Activated CD8-positive, alpha-beta T cell treated with anti-CD3 and anti-CD28 coated beads, Interleukin-2, amount 10 ng/mL, durations not matched to agents 7 days and 5 days (primary cell): ENCODE measurements at regions of chr10 and their contacts with region 1.

Region 1: GRCh38 chr10:129332476-129332875 is 134.6 kb upstream of the MGMT start:
- DNase-seq: peak; percentile 28
- ATAC-seq: no peak
- H3K4me3 Mint-ChIP-seq: no peak overlapping the region
- H3K27ac Mint-ChIP-seq: no peak overlapping the region
- H3K4me1 Mint-ChIP-seq: no peaks in the 10 kb centered on the region
- H3K27me3 Mint-ChIP-seq: no peaks in the 10 kb centered on the region

Region 2: DNA sequence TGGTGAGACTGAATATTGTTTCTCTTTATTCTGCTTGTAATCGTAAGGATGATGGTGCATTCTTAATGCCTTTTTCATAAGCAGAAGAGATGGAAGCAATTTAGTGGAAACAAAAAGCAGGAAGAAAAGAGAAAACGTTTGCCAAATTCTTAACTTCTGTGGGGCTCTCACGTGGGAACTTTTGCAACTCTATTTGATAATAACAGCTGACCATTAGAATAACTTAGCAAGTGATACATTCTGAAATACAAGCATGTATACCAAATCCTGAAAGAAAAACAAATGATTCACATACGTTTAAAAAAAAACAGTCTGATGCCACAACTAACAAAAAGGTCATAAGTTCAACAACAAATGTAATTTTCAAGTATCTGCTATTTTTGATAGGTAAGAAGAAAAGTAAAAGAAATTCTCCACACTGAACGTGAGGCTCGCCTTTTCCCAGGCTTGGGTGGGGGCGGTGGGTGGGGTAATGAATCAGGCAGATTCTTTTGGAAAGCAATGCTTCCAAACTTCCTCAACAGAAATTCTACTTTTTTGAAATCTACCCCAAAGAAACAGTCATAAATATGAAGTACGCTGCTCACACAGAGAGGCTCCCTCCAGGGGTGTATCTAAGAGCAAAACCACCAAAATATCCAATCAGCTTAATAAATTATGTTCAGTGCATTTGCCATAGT is 311.7 kb before region 1 on chr10:
- CTCF ChIA-PET with region 1: no interaction called
- POLR2A ChIA-PET with region 1: no interaction called
- DNase-seq: no peak
- ATAC-seq: no peak
- H3K4me3 Mint-ChIP-seq: no peak overlapping the region
- H3K27ac Mint-ChIP-seq: no peak overlapping the region
- H3K4me1 Mint-ChIP-seq: no peaks in the 10 kb centered on the region
- H3K27me3 Mint-ChIP-seq: no peaks in the 10 kb centered on the region

Region 3: GRCh38 chr10:129030996-129031843 is 301.3 kb before region 1 on chr10:
- CTCF ChIA-PET with region 1: interaction called, 20 read pairs
- POLR2A ChIA-PET with region 1: no interaction called
- DNase-seq: peak; percentile 65
- ATAC-seq: peak; percentile 65
- H3K4me3 Mint-ChIP-seq: no peak overlapping the region
- H3K27ac Mint-ChIP-seq: no peak overlapping the region
- H3K4me1 Mint-ChIP-seq: peaks cover 34% of the 10 kb centered on the region
- H3K27me3 Mint-ChIP-seq: peaks cover 12% of the 10 kb centered on the region

Region 4: GRCh38 chr10:129353096-129353495 is 20.6 kb after region 1 on chr10:
- CTCF ChIA-PET with region 1: no interaction called
- POLR2A ChIA-PET with region 1: no interaction called
- DNase-seq: no peak
- ATAC-seq: no peak
- H3K4me3 Mint-ChIP-seq: no peak overlapping the region
- H3K27ac Mint-ChIP-seq: no peak overlapping the region
- H3K4me1 Mint-ChIP-seq: no peaks in the 10 kb centered on the region
- H3K27me3 Mint-ChIP-seq: no peaks in the 10 kb centered on the region